ENCODE measurements at regions of chr14 and their contacts with region 1.

Region 1: GRCh38 chr14:94412671-94413638 is 24.6 kb upstream of the SERPINA1 start:
- DNase-seq: peak; percentile 51
- H3K4me3 ChIP-seq: no peak overlapping the region
- H3K27ac ChIP-seq: no peak overlapping the region
- H3K4me1 ChIP-seq: peaks cover 18% of the 10 kb centered on the region
- H3K27me3 ChIP-seq: no peaks in the 10 kb centered on the region
- CTCF ChIP-seq: peak; percentile 50 to 82

Region 2: GRCh38 chr14:94180655-94181271 is 232.2 kb before region 1 on chr14:
- CTCF ChIA-PET with region 1: no interaction called
- dilution Hi-C with region 1: no loop called
- in situ Hi-C with region 1: no loop called
- intact Hi-C with region 1: loop called (anchors 2 kb)
- DNase-seq: peak; percentile 60
- H3K4me3 ChIP-seq: peak overlapping the region in 2 of 3 experiments; percentile 37 to 45
- H3K27ac ChIP-seq: peak overlapping the region; percentile 61
- H3K4me1 ChIP-seq: peaks cover 23% of the 10 kb centered on the region
- H3K27me3 ChIP-seq: no peaks in the 10 kb centered on the region
- CTCF ChIP-seq: peak; percentile 58 to 63

Region 3: GRCh38 chr14:94313991-94314655 is 98.8 kb before region 1 on chr14:
- CTCF ChIA-PET with region 1: no interaction called
- dilution Hi-C with region 1: no loop called
- in situ Hi-C with region 1: no loop called
- intact Hi-C with region 1: loop called (anchors 5 kb)
- DNase-seq: peak; percentile 78
- H3K4me3 ChIP-seq: no peak overlapping the region
- H3K27ac ChIP-seq: no peak overlapping the region
- H3K4me1 ChIP-seq: peaks cover 19% of the 10 kb centered on the region
- H3K27me3 ChIP-seq: no peaks in the 10 kb centered on the region
- CTCF ChIP-seq: no peak

Region 4: GRCh38 chr14:94355191-94355797 is 57.7 kb before region 1 on chr14:
- CTCF ChIA-PET with region 1: no interaction called
- dilution Hi-C with region 1: no loop called
- in situ Hi-C with region 1: no loop called
- intact Hi-C with region 1: loop called (anchors 1 kb)
- DNase-seq: peak; percentile 66
- H3K4me3 ChIP-seq: no peak overlapping the region
- H3K27ac ChIP-seq: no peak overlapping the region
- H3K4me1 ChIP-seq: peaks cover 12% of the 10 kb centered on the region
- H3K27me3 ChIP-seq: no peaks in the 10 kb centered on the region
- CTCF ChIP-seq: peak; percentile 47 to 79